MCF 10A (cell line): ENCODE measurements at regions of chr14 and their contacts with region 1.

Region 1: DNA sequence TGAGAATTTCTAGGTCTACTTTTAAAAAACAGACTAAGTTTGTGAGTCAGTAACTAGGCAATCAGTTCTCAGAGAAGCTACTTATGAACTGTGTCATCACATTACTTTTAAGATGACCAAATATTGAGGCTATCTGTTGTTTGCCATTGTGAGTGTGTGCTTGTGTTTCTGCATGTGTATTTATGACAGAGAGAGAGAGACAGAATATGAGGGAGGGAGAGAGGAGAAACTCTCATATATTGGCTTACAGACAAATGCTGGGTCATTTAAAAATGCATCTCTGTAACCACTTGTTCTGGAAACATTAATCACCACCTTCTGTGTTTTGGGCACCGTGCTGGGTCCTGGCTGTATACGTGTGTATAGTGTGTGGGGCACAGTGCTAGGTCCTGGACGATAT is 161.5 kb upstream of the FRMD6 start:
- DNase-seq: peak; percentile 54
- H3K4me3 Mint-ChIP-seq: peak overlapping the region; percentile 76
- H3K27ac Mint-ChIP-seq: peak overlapping the region; percentile 70
- H3K4me1 Mint-ChIP-seq: peaks cover 44% of the 10 kb centered on the region
- H3K27me3 Mint-ChIP-seq: no peaks in the 10 kb centered on the region
- CTCF ChIP-seq: no peak

Region 2: GRCh38 chr14:51335531-51335930 is 154.7 kb before region 1 on chr14:
- CTCF ChIA-PET with region 1: no interaction called
- POLR2A ChIA-PET with region 1: interaction called, 12 read pairs
- intact Hi-C with region 1: no loop called
- DNase-seq: no peak
- H3K4me3 Mint-ChIP-seq: no peak overlapping the region
- H3K27ac Mint-ChIP-seq: peak overlapping the region; percentile 84
- H3K4me1 Mint-ChIP-seq: peaks cover 51% of the 10 kb centered on the region
- H3K27me3 Mint-ChIP-seq: no peaks in the 10 kb centered on the region
- CTCF ChIP-seq: no peak

Region 3: DNA sequence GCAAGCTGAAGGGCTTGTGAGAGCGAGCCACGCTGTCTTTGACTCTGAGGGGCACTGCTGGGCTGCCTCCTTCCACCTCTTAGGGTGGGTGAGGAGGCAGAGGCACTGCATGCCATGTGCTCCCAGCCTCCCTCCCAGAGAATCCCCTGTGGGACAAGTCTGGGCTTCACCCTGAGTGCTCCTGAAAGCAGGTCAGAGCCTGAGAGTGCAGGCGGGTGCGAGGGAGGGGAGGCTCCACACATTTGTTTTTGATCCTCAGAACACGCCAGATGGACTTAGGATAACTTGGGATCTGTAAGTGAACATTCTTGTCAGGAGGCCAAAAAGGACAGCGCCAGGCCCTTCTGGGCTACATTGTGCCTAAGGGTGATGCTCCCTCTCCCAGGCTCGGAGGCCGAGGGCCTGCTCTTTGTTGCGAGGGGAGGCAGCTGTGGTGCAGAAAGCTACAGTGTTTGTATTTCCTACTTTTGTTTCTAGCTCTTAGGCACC is 94.8 kb before region 1 on chr14:
- CTCF ChIA-PET with region 1: interaction called, 3 read pairs
- POLR2A ChIA-PET with region 1: interaction called, 98 read pairs
- intact Hi-C with region 1: loop called (anchors 1 kb)
- DNase-seq: peak; percentile 95
- H3K4me3 Mint-ChIP-seq: peak overlapping the region; percentile 48
- H3K27ac Mint-ChIP-seq: peak overlapping the region; percentile 97
- H3K4me1 Mint-ChIP-seq: peaks cover 44% of the 10 kb centered on the region
- H3K27me3 Mint-ChIP-seq: no peaks in the 10 kb centered on the region
- CTCF ChIP-seq: no peak

Region 4: DNA sequence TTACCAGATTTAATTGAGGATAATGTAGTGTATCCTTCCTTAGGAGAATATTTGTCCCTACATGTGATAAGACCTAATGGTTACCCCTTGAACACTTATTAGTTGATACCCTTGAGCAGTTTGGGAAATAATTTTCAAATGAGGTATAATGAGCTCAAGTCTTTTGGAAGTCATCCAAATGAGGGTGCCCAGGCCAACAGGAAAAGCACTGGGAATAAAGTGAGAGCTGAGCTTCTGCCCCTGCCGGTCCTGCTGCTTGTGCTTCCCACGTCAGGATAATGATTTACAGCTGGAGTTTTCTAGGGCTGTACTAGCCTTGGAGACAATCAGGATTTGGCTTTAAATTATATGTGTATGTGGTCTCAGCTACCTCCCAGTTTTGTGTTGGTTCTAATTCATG is 17.3 kb before region 1 on chr14:
- CTCF ChIA-PET with region 1: interaction called, 3 read pairs
- POLR2A ChIA-PET with region 1: interaction called, 23 read pairs
- intact Hi-C with region 1: no loop called
- DNase-seq: no peak
- H3K4me3 Mint-ChIP-seq: no peak overlapping the region
- H3K27ac Mint-ChIP-seq: no peak overlapping the region
- H3K4me1 Mint-ChIP-seq: peaks cover 18% of the 10 kb centered on the region
- H3K27me3 Mint-ChIP-seq: no peaks in the 10 kb centered on the region
- CTCF ChIP-seq: no peak

Region 5: GRCh38 chr14:51539571-51540037 is 49.4 kb after region 1 on chr14:
- CTCF ChIA-PET with region 1: no interaction called
- POLR2A ChIA-PET with region 1: interaction called, 113 read pairs
- intact Hi-C with region 1: no loop called
- DNase-seq: peak; percentile 81
- H3K4me3 Mint-ChIP-seq: peak overlapping the region; percentile 49
- H3K27ac Mint-ChIP-seq: peak overlapping the region; percentile 92
- H3K4me1 Mint-ChIP-seq: peaks cover 52% of the 10 kb centered on the region
- H3K27me3 Mint-ChIP-seq: no peaks in the 10 kb centered on the region
- CTCF ChIP-seq: no peak

Region 6: GRCh38 chr14:51604078-51604477 is 113.9 kb after region 1 on chr14:
- CTCF ChIA-PET with region 1: no interaction called
- POLR2A ChIA-PET with region 1: no interaction called
- intact Hi-C with region 1: loop called (anchors 5 kb)
- DNase-seq: peak; percentile 67
- H3K4me3 Mint-ChIP-seq: no peak overlapping the region
- H3K27ac Mint-ChIP-seq: no peak overlapping the region
- H3K4me1 Mint-ChIP-seq: peaks cover 26% of the 10 kb centered on the region
- H3K27me3 Mint-ChIP-seq: no peaks in the 10 kb centered on the region
- CTCF ChIP-seq: no peak